AG04449 (cell line): ENCODE measurements at regions of chr6 and their contacts with region 1.

Region 1: GRCh38 chr6:8063761-8064637 is at the start of gene BLOC1S5:
- DNase-seq: peak; percentile 79
- H3K4me3 ChIP-seq: peak within 1 kb of the TSS; percentile 93
- CTCF ChIP-seq: peak; percentile 8

Region 2: GRCh38 chr6:7615611-7616383 is 448.2 kb before region 1 on chr6:
- CTCF ChIA-PET with region 1: interaction called, 26 read pairs
- POLR2A ChIA-PET with region 1: no interaction called
- DNase-seq: no peak
- H3K4me3 ChIP-seq: no peak overlapping the region
- CTCF ChIP-seq: peak; percentile 61

Region 3: DNA sequence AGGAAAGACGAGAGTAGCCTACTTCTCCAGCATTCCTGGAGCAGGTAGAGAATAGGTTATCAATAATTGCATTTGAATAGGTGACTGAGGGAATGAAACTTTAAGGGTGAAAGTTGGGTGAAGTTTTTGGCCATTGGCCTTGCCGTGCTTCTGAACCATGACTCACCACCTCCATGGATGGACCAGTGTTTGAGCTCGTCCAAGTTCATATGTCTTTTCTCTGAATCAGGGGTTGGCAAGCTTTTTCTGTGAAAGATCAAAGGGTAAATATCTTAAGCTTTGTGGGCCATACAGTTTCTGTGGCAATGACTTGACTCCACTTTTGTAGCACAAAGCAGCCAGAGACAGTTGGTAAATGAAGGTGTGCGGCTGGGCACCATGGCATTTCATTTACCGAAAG is 442.2 kb before region 1 on chr6:
- CTCF ChIA-PET with region 1: interaction called, 26 read pairs
- POLR2A ChIA-PET with region 1: no interaction called
- DNase-seq: no peak
- H3K4me3 ChIP-seq: no peak overlapping the region
- CTCF ChIP-seq: no peak

Region 4: GRCh38 chr6:7707787-7708186 is 356.2 kb before region 1 on chr6:
- CTCF ChIA-PET with region 1: interaction called, 15 read pairs
- POLR2A ChIA-PET with region 1: no interaction called
- DNase-seq: peak; percentile 26
- H3K4me3 ChIP-seq: no peak overlapping the region
- CTCF ChIP-seq: no peak

Region 5: GRCh38 chr6:7719364-7719850 is 344.6 kb before region 1 on chr6:
- CTCF ChIA-PET with region 1: interaction called, 211 read pairs
- POLR2A ChIA-PET with region 1: interaction called, 3 read pairs
- DNase-seq: no peak
- H3K4me3 ChIP-seq: no peak overlapping the region
- CTCF ChIP-seq: no peak

Region 6: GRCh38 chr6:7910654-7911344 is 153.2 kb before region 1 on chr6 and contains the start of gene TXNDC5:
- CTCF ChIA-PET with region 1: interaction called, 12 read pairs
- POLR2A ChIA-PET with region 1: no interaction called
- DNase-seq: no peak
- H3K4me3 ChIP-seq: peak within 1 kb of the TSS; percentile 78
- CTCF ChIP-seq: no peak

Region 7: GRCh38 chr6:8006208-8006607 is 57.8 kb before region 1 on chr6:
- CTCF ChIA-PET with region 1: interaction called, 26 read pairs
- POLR2A ChIA-PET with region 1: no interaction called
- DNase-seq: no peak
- H3K4me3 ChIP-seq: no peak overlapping the region
- CTCF ChIP-seq: peak; percentile 29